Caco-2 (cell line): ENCODE measurements at regions of chr16 and their contacts with region 1.

Region 1: GRCh38 chr16:16127469-16128116 is 95.7 kb downstream of the ABCC6 start:
- DNase-seq: peak; percentile 72 to 81
- H3K4me3 ChIP-seq: no peak overlapping the region
- H3K4me3 Mint-ChIP-seq: no peak overlapping the region
- H3K27ac Mint-ChIP-seq: peak overlapping the region; percentile 50
- H3K4me1 ChIP-seq: no peaks in the 10 kb centered on the region
- H3K4me1 Mint-ChIP-seq: no peaks in the 10 kb centered on the region
- H3K27me3 ChIP-seq: no peaks in the 10 kb centered on the region
- H3K27me3 Mint-ChIP-seq: no peaks in the 10 kb centered on the region
- CTCF ChIP-seq: peak; percentile 77

Region 2: GRCh38 chr16:15765880-15766279 is 361.7 kb before region 1 on chr16:
- CTCF ChIA-PET with region 1: no interaction called
- POLR2A ChIA-PET with region 1: no interaction called
- intact Hi-C with region 1: loop called (anchors 1 kb)
- DNase-seq: peak in 1 of 2 experiments; percentile 53
- H3K4me3 ChIP-seq: no peak overlapping the region
- H3K4me3 Mint-ChIP-seq: no peak overlapping the region
- H3K27ac Mint-ChIP-seq: no peak overlapping the region
- H3K4me1 ChIP-seq: no peaks in the 10 kb centered on the region
- H3K4me1 Mint-ChIP-seq: no peaks in the 10 kb centered on the region
- H3K27me3 ChIP-seq: no peaks in the 10 kb centered on the region
- H3K27me3 Mint-ChIP-seq: peaks cover 6% of the 10 kb centered on the region
- CTCF ChIP-seq: peak; percentile 71 to 74

Region 3: DNA sequence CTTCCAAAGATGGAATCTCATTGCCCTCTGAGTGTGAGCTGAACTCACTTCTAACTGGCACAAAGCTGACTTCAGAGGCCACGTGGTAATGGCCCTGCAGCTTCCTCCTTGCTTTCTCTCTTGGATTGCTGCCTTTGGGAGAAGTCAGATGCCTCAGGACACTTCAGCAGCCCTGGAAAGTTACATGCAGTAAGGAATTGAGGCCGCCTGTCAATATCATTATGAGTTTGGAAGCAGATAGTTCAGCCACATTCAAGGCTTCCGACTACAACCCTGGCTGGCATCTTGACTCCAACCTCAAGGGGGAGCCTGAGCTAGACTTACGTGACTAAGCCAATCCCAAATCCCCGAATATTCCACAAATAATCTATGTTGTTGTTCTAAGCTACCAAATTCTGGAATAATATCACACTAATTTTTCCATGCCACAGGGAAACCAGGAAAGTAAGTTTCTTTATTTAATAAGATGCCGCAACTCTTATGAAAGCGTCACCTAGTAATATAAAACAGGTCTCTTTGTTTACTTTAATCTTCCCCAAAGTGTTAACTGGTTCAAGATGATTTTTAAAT is 252.8 kb before region 1 on chr16:
- CTCF ChIA-PET with region 1: interaction called, 12 read pairs
- POLR2A ChIA-PET with region 1: no interaction called
- intact Hi-C with region 1: loop called (anchors 1 kb)
- DNase-seq: peak; percentile 56 to 61
- H3K4me3 ChIP-seq: no peak overlapping the region
- H3K4me3 Mint-ChIP-seq: no peak overlapping the region
- H3K27ac Mint-ChIP-seq: no peak overlapping the region
- H3K4me1 ChIP-seq: no peaks in the 10 kb centered on the region; the same call in 1 of the 2 replicates
- H3K4me1 Mint-ChIP-seq: no peaks in the 10 kb centered on the region
- H3K27me3 ChIP-seq: no peaks in the 10 kb centered on the region
- H3K27me3 Mint-ChIP-seq: no peaks in the 10 kb centered on the region
- CTCF ChIP-seq: peak; percentile 72 to 75

Region 4: GRCh38 chr16:16073891-16074881 is 53.4 kb before region 1 on chr16:
- CTCF ChIA-PET with region 1: no interaction called
- POLR2A ChIA-PET with region 1: interaction called, 3 read pairs
- intact Hi-C with region 1: loop called (anchors 1 kb)
- DNase-seq: peak; percentile 79 to 86
- H3K4me3 ChIP-seq: no peak overlapping the region
- H3K4me3 Mint-ChIP-seq: no peak overlapping the region
- H3K27ac Mint-ChIP-seq: peak overlapping the region; percentile 84
- H3K4me1 ChIP-seq: peaks cover 22% of the 10 kb centered on the region
- H3K4me1 Mint-ChIP-seq: peaks cover 19% of the 10 kb centered on the region
- H3K27me3 ChIP-seq: no peaks in the 10 kb centered on the region
- H3K27me3 Mint-ChIP-seq: no peaks in the 10 kb centered on the region
- CTCF ChIP-seq: no peak

Region 5: DNA sequence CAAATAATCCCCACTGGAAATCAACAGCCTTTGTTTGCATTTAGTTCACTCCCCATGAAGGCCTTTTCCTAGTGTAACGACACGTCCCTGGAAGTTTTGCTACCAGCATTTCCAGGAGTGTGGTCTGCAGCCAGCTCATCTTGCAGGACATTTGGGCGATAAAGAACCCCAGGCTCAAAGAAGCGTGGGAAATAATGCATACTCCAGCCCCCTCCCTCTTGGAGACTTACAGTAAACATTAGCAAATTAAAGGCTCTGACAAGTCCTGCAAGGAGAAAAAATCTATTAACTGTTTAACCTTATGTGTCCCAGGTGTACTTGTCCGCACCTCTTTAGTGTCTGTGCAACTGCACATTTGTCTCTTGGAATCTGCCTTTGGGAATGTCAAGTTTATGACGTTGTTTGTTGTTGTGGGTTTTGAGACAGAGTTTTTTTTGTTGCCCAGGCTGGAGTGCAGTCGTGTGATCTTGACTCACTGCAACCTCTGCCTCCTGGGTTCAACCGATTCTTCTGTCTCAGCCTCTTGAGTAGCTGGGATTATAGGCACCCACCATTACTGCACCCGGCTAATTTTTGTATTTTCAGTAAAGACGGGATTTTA is 47.0 kb before region 1 on chr16:
- CTCF ChIA-PET with region 1: interaction called, 10 read pairs
- POLR2A ChIA-PET with region 1: no interaction called
- intact Hi-C with region 1: no loop called
- DNase-seq: no peak
- H3K4me3 ChIP-seq: no peak overlapping the region
- H3K4me3 Mint-ChIP-seq: no peak overlapping the region
- H3K27ac Mint-ChIP-seq: no peak overlapping the region
- H3K4me1 ChIP-seq: peaks cover 2% of the 10 kb centered on the region; the same call in 1 of the 2 replicates
- H3K4me1 Mint-ChIP-seq: peaks cover 3% of the 10 kb centered on the region
- H3K27me3 ChIP-seq: no peaks in the 10 kb centered on the region
- H3K27me3 Mint-ChIP-seq: no peaks in the 10 kb centered on the region
- CTCF ChIP-seq: no peak

Region 6: DNA sequence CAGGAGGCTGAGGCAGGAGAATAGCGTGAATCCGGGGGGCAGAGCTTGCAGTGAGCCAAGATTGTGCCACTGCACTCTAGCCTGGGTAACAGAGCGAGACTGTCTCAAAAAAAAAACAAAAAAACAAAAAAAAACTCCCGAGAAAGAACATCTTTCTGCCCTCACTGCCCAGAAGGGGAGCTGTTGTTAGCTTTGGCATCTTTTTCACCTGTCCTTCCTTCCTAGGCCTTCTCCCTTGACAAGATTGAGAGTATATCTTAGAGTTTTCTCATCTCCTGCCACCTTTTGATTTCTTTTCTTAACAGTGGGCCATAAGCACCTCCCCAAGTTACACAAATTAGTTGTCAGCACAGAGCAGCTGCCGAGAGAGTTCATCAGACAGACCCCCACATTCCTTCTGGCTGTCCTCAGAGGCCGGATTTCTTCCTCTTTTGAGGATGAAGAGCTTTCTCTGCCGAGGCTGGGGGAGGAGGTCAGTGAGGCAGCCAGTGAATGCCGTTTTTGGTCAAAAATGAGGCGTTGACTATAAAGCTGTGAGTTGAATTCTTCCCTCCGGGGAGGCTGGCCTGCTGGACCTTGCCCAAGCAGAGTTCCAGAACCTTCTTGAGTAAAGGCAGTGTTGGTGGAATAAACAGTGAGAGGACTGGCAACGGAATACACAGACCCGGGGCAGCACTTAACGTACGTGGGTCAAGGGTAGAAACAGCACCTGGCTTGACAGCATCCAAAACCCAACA is 31.3 kb before region 1 on chr16:
- CTCF ChIA-PET with region 1: no interaction called
- POLR2A ChIA-PET with region 1: no interaction called
- intact Hi-C with region 1: no loop called
- DNase-seq: no peak
- H3K4me3 ChIP-seq: no peak overlapping the region
- H3K4me3 Mint-ChIP-seq: no peak overlapping the region
- H3K27ac Mint-ChIP-seq: no peak overlapping the region
- H3K4me1 ChIP-seq: no peaks in the 10 kb centered on the region
- H3K4me1 Mint-ChIP-seq: no peaks in the 10 kb centered on the region
- H3K27me3 ChIP-seq: no peaks in the 10 kb centered on the region
- H3K27me3 Mint-ChIP-seq: no peaks in the 10 kb centered on the region
- CTCF ChIP-seq: no peak

Region 7: DNA sequence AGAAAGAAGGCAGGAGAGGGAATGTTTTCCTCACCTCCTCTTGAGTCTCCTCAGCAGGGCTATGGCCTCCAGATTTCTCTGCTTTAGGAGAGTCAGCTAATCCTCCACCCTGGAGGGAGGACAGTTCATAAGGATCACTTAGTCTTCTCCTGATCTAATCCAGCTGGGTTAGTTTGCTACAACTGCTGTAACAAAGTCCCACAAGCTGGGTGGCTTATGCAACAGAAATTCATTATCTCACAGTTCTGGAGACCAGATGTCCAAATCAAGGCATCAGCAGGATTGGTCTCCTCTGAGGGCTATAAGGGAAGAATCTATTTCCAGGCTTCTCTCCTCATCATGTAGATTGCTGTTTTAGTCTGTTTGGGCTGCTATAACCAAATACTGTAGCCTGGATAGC is 1383.7 kb after region 1 on chr16:
- CTCF ChIA-PET with region 1: no interaction called
- POLR2A ChIA-PET with region 1: no interaction called
- intact Hi-C with region 1: no loop called
- DNase-seq: no peak
- H3K4me3 ChIP-seq: no peak overlapping the region
- H3K4me3 Mint-ChIP-seq: no peak overlapping the region
- H3K27ac Mint-ChIP-seq: no peak overlapping the region
- H3K4me1 ChIP-seq: peaks cover 3% of the 10 kb centered on the region; the same call in 1 of the 2 replicates
- H3K4me1 Mint-ChIP-seq: no peaks in the 10 kb centered on the region
- H3K27me3 ChIP-seq: no peaks in the 10 kb centered on the region
- H3K27me3 Mint-ChIP-seq: no peaks in the 10 kb centered on the region
- CTCF ChIP-seq: no peak